CD8-positive, alpha-beta T cell (primary cell): ENCODE measurements at regions of chr5 and their contacts with region 1.

Region 1: DNA sequence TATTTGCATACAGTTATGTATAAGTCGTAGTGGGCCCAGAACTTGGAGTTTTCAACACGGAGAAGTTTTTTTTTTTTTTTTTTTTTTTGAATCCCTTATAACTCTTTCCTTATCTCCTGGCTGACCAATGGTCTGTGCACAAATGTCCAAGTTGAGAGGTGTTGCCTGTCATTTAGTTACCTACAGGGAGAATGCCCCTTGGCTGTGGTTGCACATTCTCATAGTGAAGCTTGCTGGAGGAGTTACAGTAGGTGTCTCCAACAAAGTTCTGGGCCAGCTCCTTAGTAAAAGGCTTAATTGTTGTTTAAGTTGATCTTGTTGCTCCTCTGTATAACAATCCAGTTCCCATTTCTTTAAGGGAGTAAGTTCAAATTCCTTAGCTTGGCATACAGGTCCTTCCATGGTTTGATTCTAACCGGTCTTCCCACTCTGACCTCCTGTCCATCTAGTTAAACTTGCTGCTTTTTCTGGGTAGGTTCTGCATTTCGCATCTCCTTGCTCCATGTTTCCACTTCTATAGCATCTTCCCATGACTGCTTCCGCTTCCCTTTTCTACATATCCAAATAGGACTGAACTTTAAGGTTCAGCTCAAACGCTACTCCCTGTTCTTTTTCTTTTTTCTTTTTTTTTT is 95.4 kb downstream of the ARHGAP26 start:
- DNase-seq: no peak
- ATAC-seq: no peak
- H3K4me3 ChIP-seq: no peak overlapping the region
- H3K4me3 Mint-ChIP-seq: no peak overlapping the region
- H3K27ac ChIP-seq: no peak overlapping the region
- H3K27ac Mint-ChIP-seq: peak overlapping the region; percentile 49
- H3K4me1 ChIP-seq: peaks cover 21% of the 10 kb centered on the region
- H3K4me1 Mint-ChIP-seq: peaks cover 72% of the 10 kb centered on the region
- H3K27me3 ChIP-seq: no peaks in the 10 kb centered on the region
- H3K27me3 Mint-ChIP-seq: no peaks in the 10 kb centered on the region
- CTCF ChIP-seq: no peak

Region 2: GRCh38 chr5:142542906-142543305 is 322.6 kb before region 1 on chr5:
- CTCF ChIA-PET with region 1: no interaction called
- POLR2A ChIA-PET with region 1: no interaction called
- intact Hi-C with region 1: no loop called
- DNase-seq: no peak
- ATAC-seq: no peak
- H3K4me3 ChIP-seq: no peak overlapping the region
- H3K4me3 Mint-ChIP-seq: no peak overlapping the region
- H3K27ac ChIP-seq: no peak overlapping the region
- H3K27ac Mint-ChIP-seq: no peak overlapping the region
- H3K4me1 ChIP-seq: no peaks in the 10 kb centered on the region
- H3K4me1 Mint-ChIP-seq: peaks cover 2% of the 10 kb centered on the region
- H3K27me3 ChIP-seq: no peaks in the 10 kb centered on the region
- H3K27me3 Mint-ChIP-seq: peaks cover 16% of the 10 kb centered on the region
- CTCF ChIP-seq: no peak

Region 3: DNA sequence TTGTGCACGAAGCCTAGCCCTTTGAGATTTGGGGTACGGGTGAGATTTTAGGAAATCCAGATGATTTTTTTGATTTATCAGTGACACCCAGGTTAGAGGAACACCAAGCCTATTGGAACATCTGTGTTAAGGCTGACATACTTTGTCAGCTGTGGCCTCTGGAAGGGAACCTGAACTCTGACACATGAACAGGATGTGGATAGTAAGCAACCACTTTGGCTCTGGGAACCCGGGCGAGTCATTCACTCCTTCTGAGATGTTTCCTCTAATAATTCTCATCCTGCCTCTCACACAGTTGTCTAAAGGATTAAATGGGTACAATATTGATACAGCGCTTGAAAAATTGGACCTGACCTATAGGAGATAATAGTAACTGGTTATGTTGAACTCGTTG is 247.4 kb before region 1 on chr5:
- CTCF ChIA-PET with region 1: no interaction called
- POLR2A ChIA-PET with region 1: no interaction called
- intact Hi-C with region 1: no loop called
- DNase-seq: no peak
- ATAC-seq: no peak
- H3K4me3 ChIP-seq: no peak overlapping the region
- H3K4me3 Mint-ChIP-seq: no peak overlapping the region
- H3K27ac ChIP-seq: no peak overlapping the region
- H3K27ac Mint-ChIP-seq: no peak overlapping the region
- H3K4me1 ChIP-seq: no peaks in the 10 kb centered on the region
- H3K4me1 Mint-ChIP-seq: no peaks in the 10 kb centered on the region
- H3K27me3 ChIP-seq: no peaks in the 10 kb centered on the region
- H3K27me3 Mint-ChIP-seq: peaks cover 2% of the 10 kb centered on the region
- CTCF ChIP-seq: no peak

Region 4: GRCh38 chr5:142845402-142845921 is 20.1 kb before region 1 on chr5:
- CTCF ChIA-PET with region 1: interaction called, 7 read pairs
- POLR2A ChIA-PET with region 1: interaction called, 5 read pairs
- intact Hi-C with region 1: loop called in 1 of 2 experiments (anchors 2 kb)
- DNase-seq: peak in 4 of 9 experiments; percentile 17 to 60 (median 50)
- ATAC-seq: peak; percentile 65
- H3K4me3 ChIP-seq: no peak overlapping the region
- H3K4me3 Mint-ChIP-seq: peak overlapping the region; percentile 57
- H3K27ac ChIP-seq: peak overlapping the region in 1 of 2 experiments; percentile 55
- H3K27ac Mint-ChIP-seq: peak overlapping the region; percentile 92
- H3K4me1 ChIP-seq: peaks cover 24% of the 10 kb centered on the region
- H3K4me1 Mint-ChIP-seq: peaks cover 90% of the 10 kb centered on the region
- H3K27me3 ChIP-seq: no peaks in the 10 kb centered on the region
- H3K27me3 Mint-ChIP-seq: no peaks in the 10 kb centered on the region
- CTCF ChIP-seq: no peak